ENCODE measurements at regions of chr14 and their contacts with region 1.

Region 1: DNA sequence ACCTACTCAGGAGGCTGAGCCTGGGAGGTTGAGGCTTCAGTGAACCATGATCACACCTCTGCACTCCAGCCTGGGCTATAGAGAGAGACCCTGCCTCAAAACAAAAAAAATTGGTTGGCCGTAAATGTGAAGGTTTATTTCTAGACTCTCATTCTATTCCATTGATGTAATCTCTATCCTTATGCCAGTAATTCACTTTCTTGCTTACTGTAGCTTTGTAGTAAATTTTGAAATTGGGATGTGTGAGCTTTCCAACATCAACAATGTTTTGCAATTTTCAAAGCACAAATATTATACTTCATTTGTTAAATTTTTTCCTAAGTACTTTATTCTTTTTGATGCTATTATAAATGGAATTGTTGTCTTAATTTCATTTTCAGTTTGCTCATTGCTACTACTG is 24.6 kb downstream of the LIN52 start:
- DNase-seq: no peak
- H3K4me3 Mint-ChIP-seq: no peak overlapping the region
- H3K27ac Mint-ChIP-seq: no peak overlapping the region
- H3K4me1 Mint-ChIP-seq: no peaks in the 10 kb centered on the region
- H3K27me3 Mint-ChIP-seq: no peaks in the 10 kb centered on the region

Region 2: DNA sequence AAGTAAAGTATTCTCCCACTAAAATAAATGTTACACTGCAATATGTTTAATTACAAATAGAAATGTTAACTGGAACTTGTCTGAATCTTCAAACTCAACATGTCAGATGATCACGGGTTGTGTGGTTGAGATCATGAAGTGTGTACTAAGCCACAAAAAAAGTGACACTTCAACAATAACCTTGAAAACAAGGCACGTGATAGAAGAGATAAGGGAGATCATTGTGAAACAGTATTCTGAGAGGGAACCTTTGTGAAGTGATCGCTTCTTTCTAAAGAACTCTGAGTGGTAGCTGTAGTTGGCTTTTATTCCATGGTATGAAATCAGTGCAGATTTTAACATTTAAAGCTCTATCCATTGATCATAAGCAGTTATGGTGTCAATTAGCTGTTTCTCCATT is 35.4 kb after region 1 on chr14:
- CTCF ChIA-PET with region 1: interaction called, 3 read pairs
- POLR2A ChIA-PET with region 1: no interaction called
- intact Hi-C with region 1: loop called (anchors 5 kb)
- DNase-seq: no peak
- H3K4me3 Mint-ChIP-seq: no peak overlapping the region
- H3K27ac Mint-ChIP-seq: no peak overlapping the region
- H3K4me1 Mint-ChIP-seq: peaks cover 15% of the 10 kb centered on the region
- H3K27me3 Mint-ChIP-seq: no peaks in the 10 kb centered on the region

Region 3: GRCh38 chr14:74249433-74250375 is 140.3 kb after region 1 on chr14:
- CTCF ChIA-PET with region 1: interaction called, 14 read pairs
- POLR2A ChIA-PET with region 1: no interaction called
- intact Hi-C with region 1: loop called (anchors 1 kb)
- DNase-seq: no peak
- H3K4me3 Mint-ChIP-seq: no peak overlapping the region
- H3K27ac Mint-ChIP-seq: no peak overlapping the region
- H3K4me1 Mint-ChIP-seq: peaks cover 6% of the 10 kb centered on the region
- H3K27me3 Mint-ChIP-seq: peaks cover 30% of the 10 kb centered on the region

Region 4: GRCh38 chr14:74257078-74257989 is 148.0 kb after region 1 on chr14:
- CTCF ChIA-PET with region 1: interaction called, 14 read pairs
- POLR2A ChIA-PET with region 1: no interaction called
- intact Hi-C with region 1: no loop called
- DNase-seq: peak; percentile 74
- H3K4me3 Mint-ChIP-seq: peak overlapping the region; percentile 75
- H3K27ac Mint-ChIP-seq: no peak overlapping the region
- H3K4me1 Mint-ChIP-seq: peaks cover 4% of the 10 kb centered on the region
- H3K27me3 Mint-ChIP-seq: peaks cover 8% of the 10 kb centered on the region

Measured in activated CD4-positive, alpha-beta memory T cell treated with anti-CD3 and anti-CD28 coated beads for 36 hours (primary cell).